Activated CD4-positive, alpha-beta T cell treated with anti-CD3 and anti-CD28 coated beads for 36 hours (primary cell): ENCODE measurements at regions of chr11 and their contacts with region 1.

Region 1: DNA sequence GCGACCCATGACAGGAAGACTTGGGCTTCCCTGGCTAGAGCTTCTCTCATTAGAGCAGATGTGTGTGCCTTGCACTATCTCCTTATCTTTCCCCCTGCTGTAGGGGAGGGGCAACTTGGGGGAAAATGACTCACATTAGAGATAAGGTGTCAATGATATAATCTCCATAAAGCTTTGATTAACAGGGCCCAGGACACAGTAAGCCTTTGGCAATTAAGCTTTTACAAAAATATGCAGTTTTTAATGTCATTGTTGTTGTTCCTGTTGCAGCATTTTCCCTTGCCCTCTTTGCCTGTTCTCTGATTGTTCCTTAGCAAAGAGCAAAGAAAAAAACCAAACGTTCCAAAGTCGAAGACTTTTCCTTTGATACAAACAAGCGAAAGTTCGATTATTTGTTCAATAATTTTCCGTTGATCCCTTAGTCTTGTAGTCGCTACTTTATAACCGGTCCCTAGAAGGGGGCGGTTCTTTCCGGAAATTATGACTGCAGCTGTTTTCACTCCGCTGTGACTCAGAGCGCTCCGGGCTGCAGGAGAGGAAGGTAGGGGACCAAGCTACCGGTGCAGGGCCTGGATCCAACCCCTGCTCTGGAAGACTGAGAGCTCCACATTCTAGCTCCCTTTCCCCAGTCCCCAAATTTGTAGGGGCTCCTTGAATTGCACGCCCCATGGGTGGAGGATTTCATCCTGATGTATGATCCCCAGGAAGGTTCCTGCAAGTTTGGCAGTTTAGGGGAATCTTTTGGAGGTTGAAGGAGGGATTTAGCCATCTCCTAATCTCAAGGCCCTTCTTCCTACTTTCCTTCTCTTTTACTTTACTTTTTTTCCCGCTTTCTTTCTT is at the start of gene VWA5A:
- DNase-seq: peak; percentile 90
- ATAC-seq: peak; percentile 99
- H3K4me3 Mint-ChIP-seq: peak within 1 kb of the TSS; percentile 78
- H3K27ac Mint-ChIP-seq: peak within 1 kb of the TSS; percentile 87
- H3K4me1 Mint-ChIP-seq: peaks cover 23% of the 10 kb centered on the region
- H3K27me3 Mint-ChIP-seq: peaks cover 6% of the 10 kb centered on the region
- total RNA-seq, gene VWA5A: 8.6 to 8.8 TPM

Region 2: GRCh38 chr11:123741159-123742028 is 373.8 kb before region 1 on chr11 and contains the start of gene ZNF202:
- CTCF ChIA-PET with region 1: no interaction called
- POLR2A ChIA-PET with region 1: no interaction called
- intact Hi-C with region 1: loop called (anchors 2 to 5 kb)
- DNase-seq: peak; percentile 96
- ATAC-seq: peak; percentile 96
- H3K4me3 Mint-ChIP-seq: peak within 1 kb of the TSS; percentile 81
- H3K27ac Mint-ChIP-seq: peak within 1 kb of the TSS; percentile 97
- H3K4me1 Mint-ChIP-seq: peaks cover 31% of the 10 kb centered on the region
- H3K27me3 Mint-ChIP-seq: peaks cover 2% of the 10 kb centered on the region
- total RNA-seq, gene ZNF202: 9.5 to 12.1 TPM

Region 3: DNA sequence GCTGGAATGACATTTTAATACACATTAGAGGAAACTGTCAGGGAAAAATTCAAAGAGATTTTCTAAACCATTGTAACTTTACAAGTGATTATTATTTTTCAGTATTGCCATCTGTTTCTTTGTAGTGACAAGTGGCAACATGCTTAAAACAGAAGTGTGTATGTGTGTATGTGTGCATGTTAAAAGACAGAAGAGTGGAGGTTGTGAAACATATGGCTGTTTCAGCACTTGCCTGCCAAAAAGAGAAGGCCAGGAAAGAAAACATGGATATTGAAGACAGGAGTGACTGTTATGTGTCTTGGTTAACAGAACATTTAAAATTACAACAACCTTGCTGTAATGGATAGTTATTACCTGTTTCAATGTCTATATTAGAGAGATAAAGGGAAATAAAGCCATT is 24.2 kb before region 1 on chr11:
- CTCF ChIA-PET with region 1: no interaction called
- POLR2A ChIA-PET with region 1: no interaction called
- intact Hi-C with region 1: no loop called
- DNase-seq: no peak
- ATAC-seq: no peak
- H3K4me3 Mint-ChIP-seq: no peak overlapping the region
- H3K27ac Mint-ChIP-seq: no peak overlapping the region
- H3K4me1 Mint-ChIP-seq: no peaks in the 10 kb centered on the region
- H3K27me3 Mint-ChIP-seq: peaks cover 22% of the 10 kb centered on the region